Activated CD4-positive, alpha-beta memory T cell treated with anti-CD3 and anti-CD28 coated beads for 36 hours (primary cell): ENCODE measurements at regions of chr1 and their contacts with region 1.

Region 1: DNA sequence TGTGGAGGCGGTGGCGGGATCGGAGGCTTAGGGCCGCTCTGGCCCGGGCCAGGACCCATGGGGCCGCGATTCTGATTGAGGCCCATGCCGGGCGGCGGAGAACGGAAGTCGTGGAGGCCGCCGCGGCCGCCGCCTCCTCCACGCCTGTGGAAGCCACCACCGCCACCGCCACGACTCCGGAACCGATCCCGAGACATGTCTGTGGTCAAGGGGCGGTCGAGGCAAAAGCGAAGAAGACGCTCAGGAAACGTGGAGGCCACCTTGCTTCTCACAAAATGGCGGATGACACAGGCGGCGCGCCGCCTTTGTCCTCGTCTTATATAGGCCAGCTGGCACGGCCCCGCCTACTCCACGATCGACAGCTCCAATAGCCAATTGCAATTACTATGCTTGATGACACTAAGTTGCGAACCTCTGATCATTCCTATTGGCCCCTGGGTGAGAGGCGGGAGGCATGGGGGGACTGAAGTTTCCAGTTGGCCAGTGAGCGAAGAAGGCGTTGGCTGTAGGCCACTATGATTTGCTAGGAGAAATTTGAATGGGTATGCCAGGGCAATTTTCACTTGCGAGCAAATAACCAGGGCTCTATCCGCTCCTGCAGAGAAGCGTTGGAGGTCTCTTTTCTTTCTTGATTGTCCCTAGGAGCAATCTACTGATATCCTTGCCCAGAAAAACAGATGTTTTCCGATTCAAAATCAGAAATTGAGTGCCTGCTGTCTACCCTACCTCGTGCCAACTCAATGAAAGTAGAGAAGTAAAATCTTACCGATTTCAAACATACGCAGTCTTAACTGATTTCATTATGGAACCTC is at the start of gene SFPQ:
- DNase-seq: peak; percentile 98
- H3K4me3 Mint-ChIP-seq: peak within 1 kb of the TSS; percentile 95
- H3K27ac Mint-ChIP-seq: peak within 1 kb of the TSS; percentile 98
- H3K4me1 Mint-ChIP-seq: peaks cover 35% of the 10 kb centered on the region
- H3K27me3 Mint-ChIP-seq: no peaks in the 10 kb centered on the region
- total RNA-seq, gene SFPQ: 259 to 275 TPM

Region 2: GRCh38 chr1:34859446-34860200 is 333.4 kb before region 1 on chr1 and contains the start of gene SMIM12:
- CTCF ChIA-PET with region 1: no interaction called
- POLR2A ChIA-PET with region 1: interaction called, 3 read pairs
- intact Hi-C with region 1: loop called (anchors 2 kb)
- DNase-seq: peak; percentile 96
- H3K4me3 Mint-ChIP-seq: peak within 1 kb of the TSS; percentile 98
- H3K27ac Mint-ChIP-seq: peak within 1 kb of the TSS; percentile 98
- H3K4me1 Mint-ChIP-seq: peaks cover 42% of the 10 kb centered on the region
- H3K27me3 Mint-ChIP-seq: no peaks in the 10 kb centered on the region
- total RNA-seq, gene SMIM12: 46.5 to 46.7 TPM

Region 3: GRCh38 chr1:35079003-35079930 is 113.8 kb before region 1 on chr1 and contains the start of gene ZMYM1:
- CTCF ChIA-PET with region 1: no interaction called
- POLR2A ChIA-PET with region 1: interaction called, 4 read pairs
- intact Hi-C with region 1: loop called (anchors 1 kb)
- DNase-seq: peak; percentile 95
- H3K4me3 Mint-ChIP-seq: peak within 1 kb of the TSS; percentile 94
- H3K27ac Mint-ChIP-seq: peak within 1 kb of the TSS; percentile 98
- H3K4me1 Mint-ChIP-seq: peaks cover 35% of the 10 kb centered on the region
- H3K27me3 Mint-ChIP-seq: no peaks in the 10 kb centered on the region
- total RNA-seq, gene ZMYM1: 3.6 to 3.9 TPM

Region 4: DNA sequence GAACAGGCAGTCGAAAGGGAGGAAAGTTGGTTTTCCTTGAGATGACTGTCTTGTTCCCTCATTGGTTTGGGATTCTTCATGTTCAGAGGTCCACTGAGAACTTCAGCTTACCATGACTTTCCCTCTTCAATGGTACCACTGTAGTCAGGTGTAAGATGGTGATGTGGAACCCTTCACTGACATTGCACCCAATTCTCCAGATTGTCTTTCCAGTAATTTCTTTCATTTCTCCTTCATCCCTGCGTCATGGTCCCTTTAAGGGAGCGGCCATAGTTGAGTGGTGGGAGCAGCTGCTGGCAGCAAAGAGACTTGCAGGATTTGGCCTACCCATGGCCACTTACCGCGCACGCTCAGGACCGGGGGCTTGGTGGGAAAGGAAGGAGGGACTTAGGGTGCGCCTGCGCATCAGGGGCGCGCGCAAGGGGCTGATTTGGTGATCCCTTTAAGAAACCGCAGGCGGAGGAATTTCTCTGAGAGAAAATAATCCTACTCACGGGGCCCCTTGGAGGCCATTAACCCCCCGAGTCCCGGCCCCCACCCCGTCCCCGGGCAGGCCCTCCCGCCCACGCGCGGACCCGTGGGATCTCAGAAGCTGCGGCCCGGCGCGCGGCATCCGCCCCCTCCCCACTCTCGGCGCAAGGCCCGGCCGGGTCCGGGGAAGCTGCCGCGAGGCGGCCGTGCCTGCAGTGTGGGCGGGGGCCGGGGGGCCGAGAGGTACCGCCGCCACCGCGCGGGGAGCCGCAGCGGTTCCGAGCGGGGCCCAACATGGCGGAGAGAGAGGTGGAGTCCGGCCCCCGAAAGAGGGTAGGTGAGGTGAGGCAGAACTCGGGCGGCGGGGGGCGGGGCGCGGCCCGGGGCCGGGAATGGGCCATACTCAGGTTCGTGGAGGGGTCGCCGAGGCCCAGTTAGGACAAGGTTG is 75.5 kb after region 1 on chr1 and contains the start of gene ZMYM4:
- CTCF ChIA-PET with region 1: interaction called, 4 read pairs
- POLR2A ChIA-PET with region 1: no interaction called
- intact Hi-C with region 1: loop called (anchors 2 kb)
- DNase-seq: peak; percentile 94
- H3K4me3 Mint-ChIP-seq: peak within 1 kb of the TSS; percentile 87
- H3K27ac Mint-ChIP-seq: peak within 1 kb of the TSS; percentile 90
- H3K4me1 Mint-ChIP-seq: peaks cover 27% of the 10 kb centered on the region
- H3K27me3 Mint-ChIP-seq: peaks cover 3% of the 10 kb centered on the region
- total RNA-seq, gene ZMYM4: 27.2 to 27.4 TPM

Region 5: GRCh38 chr1:35715568-35716002 is 522.5 kb after region 1 on chr1:
- CTCF ChIA-PET with region 1: no interaction called
- POLR2A ChIA-PET with region 1: no interaction called
- intact Hi-C with region 1: loop called (anchors 5 kb)
- DNase-seq: peak; percentile 86
- H3K4me3 Mint-ChIP-seq: no peak overlapping the region
- H3K27ac Mint-ChIP-seq: no peak overlapping the region
- H3K4me1 Mint-ChIP-seq: peaks cover 32% of the 10 kb centered on the region
- H3K27me3 Mint-ChIP-seq: no peaks in the 10 kb centered on the region